HCT116 (cell line): ENCODE measurements at regions of chr2 and their contacts with region 1.

Region 1: GRCh38 chr2:240851078-240851991 is 17.3 kb upstream of the AGXT start:
- DNase-seq: peak; percentile 58
- ATAC-seq: peak; percentile 98
- H3K4me3 ChIP-seq: no peak overlapping the region
- H3K27ac ChIP-seq: no peak overlapping the region
- H3K4me1 ChIP-seq: no peaks in the 10 kb centered on the region
- H3K27me3 ChIP-seq: no peaks in the 10 kb centered on the region
- CTCF ChIP-seq: peak; percentile 84 to 94 (median 92); a peak in 5 of 6 replicates
- POLR2A ChIP-seq: no peak
- RAD21 ChIP-seq: peak; percentile 97

Region 2: DNA sequence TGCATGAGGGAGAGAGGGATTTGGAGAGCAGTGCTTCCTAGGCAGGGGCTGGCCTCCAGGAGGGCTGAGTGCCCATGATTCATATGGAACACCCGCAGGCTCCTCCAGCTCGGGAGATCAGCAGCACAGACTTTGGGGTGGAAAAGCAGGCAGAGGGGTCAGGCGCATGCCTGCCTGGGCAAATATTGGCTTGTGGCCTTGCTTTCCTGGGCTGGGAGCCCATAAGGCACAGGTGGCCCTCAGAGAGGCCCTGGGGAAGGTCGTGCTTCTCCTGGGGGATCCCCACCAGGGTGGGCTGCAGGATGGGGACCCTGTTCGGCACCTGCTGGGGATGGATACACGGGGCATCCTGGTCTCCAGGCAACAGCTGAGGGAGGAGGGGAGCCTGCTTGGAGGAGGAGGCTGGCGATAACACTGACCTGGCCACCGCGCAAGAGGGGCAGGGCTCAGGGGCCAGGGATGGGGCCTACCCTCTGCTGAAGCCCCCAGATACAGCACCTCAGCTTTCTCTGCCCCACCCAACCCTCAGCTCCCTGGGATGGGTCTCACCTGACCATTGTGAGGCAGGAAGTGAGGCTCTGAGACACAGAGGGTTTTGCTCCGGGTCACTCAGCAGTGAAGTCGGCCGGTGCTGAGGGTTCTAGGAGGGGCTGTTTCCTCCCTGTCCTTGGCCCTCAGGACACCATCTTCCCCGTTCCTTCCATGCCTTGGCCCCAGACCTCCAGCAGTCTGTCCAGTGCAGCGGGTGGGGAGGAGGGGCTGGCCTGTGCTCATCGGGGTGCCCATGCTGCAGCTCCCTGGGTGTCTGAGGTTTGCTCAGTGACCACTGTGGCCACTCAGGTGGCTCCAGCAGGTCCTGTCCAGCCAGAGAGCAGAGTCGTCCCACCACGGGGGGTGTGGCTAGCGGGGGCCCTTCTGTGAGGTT is 147.7 kb before region 1 on chr2:
- CTCF ChIA-PET with region 1: no interaction called
- POLR2A ChIA-PET with region 1: no interaction called
- RAD21 ChIA-PET with region 1: no interaction called
- intact Hi-C with region 1: no loop called
- DNase-seq: no peak
- ATAC-seq: no peak
- H3K4me3 ChIP-seq: no peak overlapping the region
- H3K27ac ChIP-seq: no peak overlapping the region
- H3K4me1 ChIP-seq: no peaks in the 10 kb centered on the region
- H3K27me3 ChIP-seq: no peaks in the 10 kb centered on the region; the same call in 1 of the 2 replicates
- CTCF ChIP-seq: no peak
- POLR2A ChIP-seq: no peak
- RAD21 ChIP-seq: no peak

Region 3: DNA sequence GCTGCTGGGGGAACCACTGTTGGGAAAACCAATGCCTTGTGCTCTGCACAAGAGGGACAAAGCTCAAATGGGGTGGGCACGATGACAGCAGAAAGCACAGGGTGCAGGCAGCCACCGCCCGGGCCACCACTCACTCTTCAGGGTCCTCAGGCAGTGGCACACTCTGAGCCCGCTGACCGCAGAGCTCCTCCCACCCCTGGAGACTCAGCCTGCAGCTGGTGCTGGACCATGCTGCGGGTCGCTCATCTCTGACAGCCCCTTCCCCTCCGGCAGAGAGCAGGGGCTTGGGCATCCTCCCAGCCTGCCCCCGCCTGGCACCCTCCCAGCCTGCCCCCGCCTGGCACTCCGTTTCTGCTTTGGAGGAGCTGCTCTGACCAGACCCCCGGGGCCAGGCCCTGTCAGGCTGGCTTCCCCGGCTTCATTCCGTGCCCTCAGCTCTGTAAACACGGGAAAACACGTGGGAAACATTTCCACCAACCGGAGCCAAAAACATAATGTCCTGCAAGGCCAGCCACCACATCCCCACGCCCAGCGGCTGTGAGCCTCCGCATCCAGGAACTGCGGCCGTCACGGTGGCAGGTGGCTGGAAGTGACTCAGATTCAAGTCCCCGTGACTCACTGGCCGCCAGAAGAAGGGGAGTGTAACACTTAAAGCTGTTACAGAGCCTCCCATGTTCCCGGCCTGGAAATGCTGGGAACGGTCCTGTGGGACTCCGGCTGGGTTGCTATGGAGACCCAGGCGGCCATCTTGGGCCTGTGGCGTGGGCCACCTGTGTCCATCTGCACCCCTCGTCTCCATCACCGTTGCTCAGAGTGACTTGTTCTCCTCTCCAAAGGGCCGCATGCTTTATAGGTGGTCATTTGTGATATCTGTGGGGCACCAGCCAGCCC is 140.3 kb after region 1 on chr2:
- CTCF ChIA-PET with region 1: interaction called, 3 read pairs
- POLR2A ChIA-PET with region 1: no interaction called
- RAD21 ChIA-PET with region 1: no interaction called
- intact Hi-C with region 1: loop called (anchors 2 kb)
- DNase-seq: peak; percentile 80
- ATAC-seq: peak; percentile 74
- H3K4me3 ChIP-seq: peak overlapping the region in 1 of 2 experiments; percentile 8; a peak in 1 of 4 replicates
- H3K27ac ChIP-seq: no peak overlapping the region; the same call in 1 of the 2 replicates
- H3K4me1 ChIP-seq: peaks cover 6 to 20% of the 10 kb centered on the region in 2 experiments; a peak in 3 of 4 replicates
- H3K27me3 ChIP-seq: no peaks in the 10 kb centered on the region
- CTCF ChIP-seq: no peak
- POLR2A ChIP-seq: no peak
- RAD21 ChIP-seq: no peak

Region 4: DNA sequence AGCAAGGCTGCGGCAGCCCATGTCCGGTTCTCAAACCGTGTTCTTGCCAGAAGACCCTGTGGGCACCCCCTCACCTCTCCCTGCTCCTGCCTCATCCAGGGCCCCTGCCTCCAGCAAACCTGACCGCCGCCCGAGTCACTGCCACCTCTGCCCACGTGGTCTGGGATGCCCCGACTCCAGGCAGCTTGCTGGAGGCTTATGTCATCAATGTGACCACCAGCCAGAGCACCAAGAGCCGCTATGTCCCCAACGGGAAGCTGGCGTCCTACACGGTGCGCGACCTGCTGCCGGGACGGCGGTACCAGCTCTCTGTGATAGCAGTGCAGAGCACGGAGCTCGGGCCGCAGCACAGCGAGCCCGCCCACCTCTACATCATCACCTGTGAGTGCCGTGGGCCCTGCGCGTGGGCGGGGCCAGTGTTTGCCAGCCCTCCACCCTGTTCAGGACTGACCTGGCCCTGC is 218.5 kb after region 1 on chr2:
- CTCF ChIA-PET with region 1: no interaction called
- POLR2A ChIA-PET with region 1: no interaction called
- RAD21 ChIA-PET with region 1: no interaction called
- intact Hi-C with region 1: loop called (anchors 10 kb)
- DNase-seq: no peak
- ATAC-seq: no peak
- H3K4me3 ChIP-seq: no peak overlapping the region
- H3K27ac ChIP-seq: no peak overlapping the region
- H3K4me1 ChIP-seq: no peaks in the 10 kb centered on the region
- H3K27me3 ChIP-seq: no peaks in the 10 kb centered on the region
- CTCF ChIP-seq: no peak
- POLR2A ChIP-seq: no peak
- RAD21 ChIP-seq: no peak